ENCODE measurements at regions of chr13 and their contacts with region 1.

Region 1: DNA sequence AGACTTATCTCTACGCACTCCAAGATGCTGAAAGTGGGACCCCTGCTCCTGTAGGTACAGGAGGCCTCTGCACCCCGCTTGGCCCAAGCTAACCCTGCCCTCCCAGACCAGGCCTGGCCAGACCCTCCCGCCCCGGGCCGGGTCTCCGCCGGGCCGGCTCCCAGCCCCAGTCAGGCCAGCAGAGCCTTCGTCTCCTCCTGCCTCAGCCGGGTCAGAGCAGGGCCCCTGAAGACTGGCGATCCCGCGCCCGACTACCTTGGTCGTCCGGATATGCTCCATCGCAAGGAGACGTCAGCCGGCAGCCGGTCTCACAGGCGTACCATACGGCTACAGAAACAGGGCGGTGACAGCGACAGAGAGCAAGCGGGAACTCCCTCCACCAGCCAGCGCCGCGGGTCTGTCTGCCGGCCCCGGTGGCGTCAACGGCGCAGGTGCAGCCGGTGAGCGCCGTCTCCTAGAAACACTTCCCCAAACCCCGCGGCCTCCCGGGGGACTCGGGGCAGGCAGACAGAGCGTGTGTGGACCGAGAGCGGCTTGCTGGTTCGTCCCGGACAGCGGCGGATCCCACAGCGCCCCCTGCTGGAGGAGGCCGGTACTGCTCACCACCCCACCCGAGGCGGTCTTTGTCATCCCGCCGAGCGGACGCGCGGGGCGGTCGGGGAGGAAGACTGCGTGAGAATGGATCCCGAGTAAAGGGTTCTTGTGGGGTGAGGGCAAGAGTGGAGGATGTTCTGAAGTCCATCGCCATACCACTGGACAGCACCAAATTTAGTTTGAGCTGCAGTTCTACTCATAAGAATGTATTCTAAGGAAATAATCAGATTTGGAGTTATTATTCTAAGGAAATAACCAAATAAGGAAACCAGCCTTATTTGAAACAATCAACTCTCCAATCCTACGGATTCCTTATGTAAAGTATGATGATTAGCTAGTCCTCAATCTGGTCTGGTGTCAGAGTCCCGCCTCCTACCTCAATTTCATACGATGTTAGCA is at the start of gene MTMR6:
- DNase-seq: peak; percentile 79
- H3K4me3 Mint-ChIP-seq: peak within 1 kb of the TSS; percentile 100
- H3K27ac Mint-ChIP-seq: peak within 1 kb of the TSS; percentile 98
- H3K4me1 Mint-ChIP-seq: peaks cover 4% of the 10 kb centered on the region
- H3K27me3 Mint-ChIP-seq: no peaks in the 10 kb centered on the region
- CTCF ChIP-seq: peak; percentile 99
- total RNA-seq, gene MTMR6: 21.0 and 21.5 TPM in 2 replicates

Region 2: DNA sequence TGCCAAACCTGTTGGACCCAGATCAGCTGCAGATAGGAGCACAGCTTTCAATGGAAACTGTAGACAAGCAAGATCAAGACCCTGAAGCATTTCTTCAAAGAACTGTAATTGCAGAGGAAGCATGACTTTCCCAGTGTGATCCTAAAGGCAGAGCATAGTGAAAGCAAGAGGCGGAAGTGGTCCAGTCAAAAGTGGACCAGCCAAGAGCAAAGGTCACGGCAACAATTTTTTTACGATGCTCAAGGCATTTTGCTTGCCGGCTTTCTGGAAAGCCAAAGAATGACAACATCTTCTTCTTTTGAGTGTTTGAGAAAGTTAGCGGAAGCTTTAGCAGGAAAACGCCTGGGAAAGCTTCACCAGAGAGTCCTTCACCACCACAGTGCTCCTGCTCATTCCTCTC is 411.7 kb before region 1 on chr13:
- CTCF ChIA-PET with region 1: no interaction called
- POLR2A ChIA-PET with region 1: no interaction called
- intact Hi-C with region 1: no loop called
- DNase-seq: no peak
- H3K4me3 Mint-ChIP-seq: no peak overlapping the region
- H3K27ac Mint-ChIP-seq: no peak overlapping the region
- H3K4me1 Mint-ChIP-seq: no peaks in the 10 kb centered on the region
- H3K27me3 Mint-ChIP-seq: no peaks in the 10 kb centered on the region
- CTCF ChIP-seq: no peak

Region 3: GRCh38 chr13:25001476-25002206 is 285.6 kb before region 1 on chr13:
- CTCF ChIA-PET with region 1: interaction called, 3 read pairs
- POLR2A ChIA-PET with region 1: no interaction called
- intact Hi-C with region 1: loop called (anchors 5 kb)
- DNase-seq: peak; percentile 53
- H3K4me3 Mint-ChIP-seq: no peak overlapping the region
- H3K27ac Mint-ChIP-seq: peak overlapping the region; percentile 66
- H3K4me1 Mint-ChIP-seq: peaks cover 19% of the 10 kb centered on the region
- H3K27me3 Mint-ChIP-seq: no peaks in the 10 kb centered on the region
- CTCF ChIP-seq: no peak

Region 4: GRCh38 chr13:25276748-25277147 is 10.5 kb before region 1 on chr13:
- CTCF ChIA-PET with region 1: interaction called, 8 read pairs
- POLR2A ChIA-PET with region 1: interaction called, 10 read pairs
- intact Hi-C with region 1: no loop called
- DNase-seq: peak; percentile 54
- H3K4me3 Mint-ChIP-seq: no peak overlapping the region
- H3K27ac Mint-ChIP-seq: no peak overlapping the region
- H3K4me1 Mint-ChIP-seq: peaks cover 42% of the 10 kb centered on the region
- H3K27me3 Mint-ChIP-seq: no peaks in the 10 kb centered on the region
- CTCF ChIP-seq: no peak

Region 5: DNA sequence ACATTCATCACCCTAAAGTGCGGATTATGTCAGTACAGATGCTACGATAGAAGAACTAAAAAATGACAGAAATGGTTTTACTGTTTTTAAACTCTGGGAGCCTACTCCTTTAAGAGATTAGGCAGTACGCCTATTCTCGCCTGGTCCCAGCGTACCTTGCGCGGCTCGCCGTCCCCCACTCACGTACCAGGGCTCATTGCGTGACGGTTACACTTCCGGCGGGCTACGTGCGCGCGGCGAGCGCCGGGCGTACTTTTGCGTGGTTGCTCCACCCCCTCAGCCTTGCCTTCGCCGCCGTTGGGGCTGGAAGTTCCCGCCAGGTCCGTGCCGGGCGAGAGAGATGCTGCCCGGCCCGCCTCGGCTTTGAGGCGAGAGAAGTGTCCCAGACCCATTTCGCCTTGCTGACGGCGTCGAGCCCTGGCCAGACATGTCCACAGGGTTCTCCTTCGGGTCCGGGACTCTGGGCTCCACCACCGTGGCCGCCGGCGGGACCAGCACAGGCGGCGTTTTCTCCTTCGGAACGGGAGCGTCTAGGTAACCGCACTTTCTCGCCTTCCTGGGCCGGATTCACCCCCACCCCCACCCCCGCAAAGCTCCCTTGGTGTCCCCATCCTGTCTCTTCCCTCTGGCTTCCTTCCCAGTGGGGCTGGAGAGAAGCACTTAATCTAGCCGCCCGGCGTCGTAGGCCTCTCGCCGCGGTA is 14.2 kb after region 1 on chr13 and contains the start of gene NUP58:
- CTCF ChIA-PET with region 1: interaction called, 16 read pairs
- POLR2A ChIA-PET with region 1: interaction called, 136 read pairs
- intact Hi-C with region 1: no loop called
- DNase-seq: peak; percentile 95
- H3K4me3 Mint-ChIP-seq: peak within 1 kb of the TSS; percentile 89
- H3K27ac Mint-ChIP-seq: peak within 1 kb of the TSS; percentile 85
- H3K4me1 Mint-ChIP-seq: peaks cover 24% of the 10 kb centered on the region
- H3K27me3 Mint-ChIP-seq: peaks cover under 1% of the 10 kb centered on the region
- CTCF ChIP-seq: no peak
- total RNA-seq, gene NUP58: 106 and 116 TPM in 2 replicates

Region 6: GRCh38 chr13:25319771-25320170 is 32.5 kb after region 1 on chr13:
- CTCF ChIA-PET with region 1: interaction called, 9 read pairs
- POLR2A ChIA-PET with region 1: interaction called, 37 read pairs
- intact Hi-C with region 1: no loop called
- DNase-seq: no peak
- H3K4me3 Mint-ChIP-seq: no peak overlapping the region
- H3K27ac Mint-ChIP-seq: peak overlapping the region; percentile 93
- H3K4me1 Mint-ChIP-seq: peaks cover 17% of the 10 kb centered on the region
- H3K27me3 Mint-ChIP-seq: no peaks in the 10 kb centered on the region
- CTCF ChIP-seq: no peak

Region 7: GRCh38 chr13:25352230-25352629 is 65.0 kb after region 1 on chr13:
- CTCF ChIA-PET with region 1: no interaction called
- POLR2A ChIA-PET with region 1: no interaction called
- intact Hi-C with region 1: no loop called
- DNase-seq: no peak
- H3K4me3 Mint-ChIP-seq: no peak overlapping the region
- H3K27ac Mint-ChIP-seq: no peak overlapping the region
- H3K4me1 Mint-ChIP-seq: no peaks in the 10 kb centered on the region
- H3K27me3 Mint-ChIP-seq: peaks cover 27% of the 10 kb centered on the region
- CTCF ChIP-seq: no peak

Measured in MCF 10A (cell line).